ENCODE measurements at regions of chr22 and their contacts with region 1.

Region 1: DNA sequence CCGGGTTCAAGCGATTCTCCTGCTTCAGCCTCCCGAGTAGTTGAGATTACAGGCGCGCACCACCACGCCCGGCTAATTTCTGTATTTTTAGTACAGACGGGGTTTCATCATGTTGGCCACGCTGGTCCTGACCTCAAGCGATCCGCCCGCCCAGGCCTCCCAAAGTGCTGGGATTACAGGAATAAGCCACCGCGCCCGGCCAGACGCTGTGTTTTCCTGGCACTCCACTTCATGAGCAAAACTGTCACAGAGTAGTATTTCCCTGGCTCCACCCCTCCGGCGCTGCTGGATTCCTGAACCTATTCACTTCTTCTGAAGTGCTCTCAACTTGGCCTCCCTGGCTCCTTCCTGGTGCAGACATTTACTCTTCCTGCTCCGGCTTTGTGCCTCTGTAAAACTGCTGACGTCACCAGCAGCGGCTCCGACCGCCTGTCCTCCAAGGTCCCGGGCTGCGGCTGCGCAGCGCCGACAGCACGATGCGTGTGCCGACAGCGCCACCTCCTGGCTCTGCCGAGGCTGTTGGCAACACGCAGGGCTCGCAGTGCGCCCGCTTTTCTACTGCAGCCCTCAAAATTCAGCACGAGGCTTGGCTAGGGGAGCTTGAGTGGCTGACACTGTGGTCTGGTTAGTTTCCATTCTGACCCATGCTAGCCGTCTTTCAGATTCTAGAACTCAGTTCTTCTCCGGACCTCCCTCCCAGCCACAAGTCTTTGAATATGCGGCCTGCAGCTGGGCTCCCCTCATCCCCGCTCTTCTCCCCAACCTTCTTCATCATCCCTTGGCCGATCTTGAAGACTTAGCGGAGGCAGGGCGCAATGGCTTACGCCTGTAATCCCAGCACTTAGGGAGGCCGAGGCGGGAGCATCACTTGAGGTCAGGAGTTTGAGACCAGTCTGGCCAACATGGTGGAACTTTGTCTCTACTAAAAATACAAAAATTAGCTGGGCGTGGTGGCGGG is 36.6 kb downstream of the APOL3 start:
- DNase-seq: peak; percentile 97 to 98 (median 97)
- ATAC-seq: peak; percentile 98
- H3K4me3 ChIP-seq: no peak overlapping the region
- H3K27ac ChIP-seq: peak overlapping the region; percentile 89
- H3K4me1 ChIP-seq: no peaks in the 10 kb centered on the region
- H3K27me3 ChIP-seq: no peaks in the 10 kb centered on the region

Region 2: GRCh38 chr22:35430897-35431322 is 693.0 kb before region 1 on chr22:
- intact Hi-C with region 1: loop called in 1 of 4 experiments (anchors 10 kb)
- DNase-seq: peak; percentile 90 to 96 (median 95)
- ATAC-seq: peak; percentile 96 to 98
- H3K4me3 ChIP-seq: no peak overlapping the region
- H3K27ac ChIP-seq: no peak overlapping the region
- H3K4me1 ChIP-seq: no peaks in the 10 kb centered on the region
- H3K27me3 ChIP-seq: no peaks in the 10 kb centered on the region

Region 3: DNA sequence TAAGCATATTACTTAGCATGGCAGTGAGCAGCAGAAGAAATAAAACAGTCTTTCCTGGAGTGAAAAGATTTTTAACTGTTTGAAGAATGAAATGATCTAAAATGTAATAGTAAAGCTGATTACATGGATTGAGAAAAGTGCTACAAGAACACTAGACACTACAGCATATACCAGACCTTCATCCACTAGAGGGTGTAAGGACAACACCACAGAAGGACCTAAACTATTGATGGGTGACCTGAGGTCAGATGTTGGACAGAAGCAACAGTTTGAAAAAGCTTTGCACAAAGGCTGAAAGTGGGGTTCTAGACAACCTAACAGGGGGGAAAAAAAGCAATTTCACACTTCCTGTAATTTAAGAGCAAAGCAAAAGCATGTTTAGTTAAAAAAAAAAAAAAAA is 193.0 kb before region 1 on chr22:
- intact Hi-C with region 1: loop called (anchors 5 to 10 kb)
- DNase-seq: no peak
- ATAC-seq: peak; percentile 93 to 94
- H3K4me3 ChIP-seq: no peak overlapping the region
- H3K27ac ChIP-seq: no peak overlapping the region
- H3K4me1 ChIP-seq: peaks cover 1% of the 10 kb centered on the region
- H3K27me3 ChIP-seq: no peaks in the 10 kb centered on the region

Region 4: GRCh38 chr22:36065775-36066559 is 58.0 kb before region 1 on chr22:
- intact Hi-C with region 1: loop called in 2 of 4 experiments (anchors 5 kb)
- DNase-seq: peak; percentile 95 to 97 (median 96)
- ATAC-seq: peak; percentile 95
- H3K4me3 ChIP-seq: peak overlapping the region; percentile 47
- H3K27ac ChIP-seq: peak overlapping the region; percentile 88
- H3K4me1 ChIP-seq: no peaks in the 10 kb centered on the region
- H3K27me3 ChIP-seq: no peaks in the 10 kb centered on the region

Measured in right cardiac atrium (tissue), 5 donors.